ENCODE measurements at regions of chr15 and their contacts with region 1.

Region 1: GRCh38 chr15:101014921-101015841 is 96.0 kb downstream of the LRRK1 start:
- ATAC-seq: peak; percentile 70 to 89 (median 82)
- H3K4me3 ChIP-seq: no peak overlapping the region
- H3K27ac ChIP-seq: no peak overlapping the region
- H3K4me1 ChIP-seq: peaks cover 11 to 13% of the 10 kb centered on the region in 2 donors

Region 2: DNA sequence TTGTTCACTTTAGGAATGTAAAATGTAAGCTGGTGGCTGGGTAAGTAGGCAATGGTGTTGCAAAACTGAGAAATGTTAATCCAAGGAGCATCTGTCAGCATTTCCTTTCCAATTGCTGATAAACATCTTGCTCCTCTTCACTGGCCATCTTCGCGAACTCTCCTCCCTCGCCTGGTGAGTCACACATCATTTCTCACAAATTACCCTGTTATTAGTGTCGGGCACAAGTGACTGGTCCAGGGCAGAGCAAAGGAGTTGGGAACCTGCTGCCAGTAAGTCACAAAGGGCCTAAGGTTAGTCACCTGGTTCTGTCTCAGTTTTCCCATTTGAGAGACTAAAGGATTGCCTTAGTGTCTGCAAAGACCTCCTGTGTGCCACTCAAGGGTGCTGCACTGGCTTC is 499.4 kb before region 1 on chr15:
- in situ Hi-C with region 1: no loop called
- ATAC-seq: peak in 2 of 8 experiments; percentile 45 to 95
- H3K4me3 ChIP-seq: no peak overlapping the region
- H3K27ac ChIP-seq: no peak overlapping the region
- H3K4me1 ChIP-seq: no peaks in the 10 kb centered on the region

Region 3: DNA sequence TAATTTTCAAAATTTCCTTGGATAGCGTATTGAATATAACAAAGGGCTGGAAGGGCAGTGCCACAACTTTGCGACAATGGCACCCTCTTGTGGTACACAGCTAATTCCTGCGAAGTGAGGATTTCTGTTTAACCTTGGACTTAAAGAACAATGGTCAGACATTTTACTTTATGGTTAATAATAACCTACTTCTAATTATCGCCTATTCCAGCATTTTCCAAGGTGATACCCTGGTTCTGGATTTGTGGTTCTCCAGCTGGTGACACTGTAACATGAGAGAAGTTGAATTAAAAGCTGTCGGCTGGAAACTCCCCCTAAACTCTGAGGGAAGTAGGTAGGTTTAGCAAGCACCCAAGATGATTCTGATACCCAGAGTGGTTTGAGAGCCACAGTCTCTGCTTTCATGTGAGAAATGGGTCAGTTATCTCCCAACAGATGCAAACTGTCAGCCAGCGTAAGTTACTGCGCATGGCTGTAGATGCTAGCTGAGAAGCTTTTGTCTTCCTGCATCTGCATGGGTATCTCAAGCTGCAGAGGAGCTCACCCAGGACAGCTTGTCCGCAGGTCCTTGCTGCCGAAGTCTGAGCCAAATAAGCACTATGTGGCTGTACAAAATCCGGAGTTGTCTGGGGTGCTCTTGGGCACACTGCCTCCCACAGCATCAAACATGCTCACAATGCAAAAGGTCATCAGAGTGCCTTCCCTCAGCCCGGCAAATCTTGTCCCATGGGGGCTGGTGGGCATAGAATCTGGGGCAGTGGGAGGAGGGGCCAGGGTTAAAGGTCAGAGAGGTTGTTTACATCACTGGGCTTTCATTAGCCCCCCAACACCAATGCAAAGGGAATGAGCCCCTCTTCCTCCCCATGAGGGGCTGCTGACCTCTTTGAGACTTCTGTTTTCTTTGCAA is 243.3 kb after region 1 on chr15:
- in situ Hi-C with region 1: loop called (anchors 5 to 10 kb)
- ATAC-seq: peak; percentile 60 to 92 (median 75)
- H3K4me3 ChIP-seq: no peak overlapping the region
- H3K27ac ChIP-seq: no peak overlapping the region
- H3K4me1 ChIP-seq: peaks cover 4 to 8% of the 10 kb centered on the region in 2 donors

Region 4: GRCh38 chr15:101269479-101270223 is 254.5 kb after region 1 on chr15:
- in situ Hi-C with region 1: loop called in 1 of 9 experiments (anchors 10 kb)
- ATAC-seq: peak in 6 of 8 experiments; percentile 4 to 41 (median 28)
- H3K4me3 ChIP-seq: no peak overlapping the region
- H3K27ac ChIP-seq: no peak overlapping the region
- H3K4me1 ChIP-seq: peaks cover 0 to 2% of the 10 kb centered on the region in 2 donors